B cell (primary cell): ENCODE measurements at regions of chr1 and their contacts with region 1.

Region 1: GRCh38 chr1:221839796-221840395 is 98.0 kb upstream of the DUSP10 start:
- DNase-seq: peak; percentile 46
- ATAC-seq: peak; percentile 79
- H3K4me3 ChIP-seq: no peak overlapping the region
- H3K4me3 Mint-ChIP-seq: peak overlapping the region; percentile 42
- H3K27ac ChIP-seq: no peak overlapping the region
- H3K27ac Mint-ChIP-seq: peak overlapping the region; percentile 75
- H3K4me1 ChIP-seq: peaks cover 30 to 34% of the 10 kb centered on the region in 2 donors
- H3K4me1 Mint-ChIP-seq: peaks cover 42% of the 10 kb centered on the region
- H3K27me3 ChIP-seq: peaks cover 0 to 6% (median 0%) of the 10 kb centered on the region in 4 experiments
- H3K27me3 Mint-ChIP-seq: no peaks in the 10 kb centered on the region
- CTCF ChIP-seq: no peak

Region 2: DNA sequence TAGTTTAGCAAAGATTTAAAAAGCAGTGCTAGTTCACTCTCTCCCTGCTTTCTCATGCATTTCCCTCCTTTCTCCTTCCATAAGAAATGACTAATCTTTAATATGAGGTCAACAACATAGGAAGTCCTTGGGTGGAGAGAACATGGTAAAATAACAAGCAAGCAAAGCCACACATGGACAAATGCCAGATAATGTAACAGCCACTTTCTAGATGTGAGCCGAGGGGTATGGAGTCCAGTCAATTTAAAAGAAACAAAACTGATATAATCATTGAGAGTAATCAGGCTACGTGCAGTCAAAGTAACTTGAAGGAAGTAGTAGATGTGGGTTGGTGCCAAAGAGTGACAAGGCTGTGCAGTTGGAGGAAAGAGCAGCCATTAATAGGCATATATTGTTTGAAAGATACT is 167.7 kb before region 1 on chr1:
- CTCF ChIA-PET with region 1: no interaction called
- POLR2A ChIA-PET with region 1: no interaction called
- intact Hi-C with region 1: no loop called
- DNase-seq: no peak
- ATAC-seq: no peak
- H3K4me3 ChIP-seq: no peak overlapping the region
- H3K4me3 Mint-ChIP-seq: no peak overlapping the region
- H3K27ac ChIP-seq: no peak overlapping the region
- H3K27ac Mint-ChIP-seq: no peak overlapping the region
- H3K4me1 ChIP-seq: no peaks in the 10 kb centered on the region
- H3K4me1 Mint-ChIP-seq: no peaks in the 10 kb centered on the region
- H3K27me3 ChIP-seq: no peaks in the 10 kb centered on the region
- H3K27me3 Mint-ChIP-seq: peaks cover 6% of the 10 kb centered on the region
- CTCF ChIP-seq: no peak

Region 3: GRCh38 chr1:221753828-221754188 is 86.1 kb before region 1 on chr1:
- CTCF ChIA-PET with region 1: no interaction called
- POLR2A ChIA-PET with region 1: no interaction called
- intact Hi-C with region 1: loop called (anchors 1 kb)
- DNase-seq: no peak
- ATAC-seq: no peak
- H3K4me3 ChIP-seq: peak overlapping the region in 1 of 5 experiments; percentile 43
- H3K4me3 Mint-ChIP-seq: peak overlapping the region; percentile 82
- H3K27ac ChIP-seq: no peak overlapping the region
- H3K27ac Mint-ChIP-seq: peak overlapping the region; percentile 85
- H3K4me1 ChIP-seq: peaks cover 15 to 22% of the 10 kb centered on the region in 2 donors
- H3K4me1 Mint-ChIP-seq: peaks cover 36% of the 10 kb centered on the region
- H3K27me3 ChIP-seq: no peaks in the 10 kb centered on the region
- H3K27me3 Mint-ChIP-seq: no peaks in the 10 kb centered on the region
- CTCF ChIP-seq: no peak

Region 4: DNA sequence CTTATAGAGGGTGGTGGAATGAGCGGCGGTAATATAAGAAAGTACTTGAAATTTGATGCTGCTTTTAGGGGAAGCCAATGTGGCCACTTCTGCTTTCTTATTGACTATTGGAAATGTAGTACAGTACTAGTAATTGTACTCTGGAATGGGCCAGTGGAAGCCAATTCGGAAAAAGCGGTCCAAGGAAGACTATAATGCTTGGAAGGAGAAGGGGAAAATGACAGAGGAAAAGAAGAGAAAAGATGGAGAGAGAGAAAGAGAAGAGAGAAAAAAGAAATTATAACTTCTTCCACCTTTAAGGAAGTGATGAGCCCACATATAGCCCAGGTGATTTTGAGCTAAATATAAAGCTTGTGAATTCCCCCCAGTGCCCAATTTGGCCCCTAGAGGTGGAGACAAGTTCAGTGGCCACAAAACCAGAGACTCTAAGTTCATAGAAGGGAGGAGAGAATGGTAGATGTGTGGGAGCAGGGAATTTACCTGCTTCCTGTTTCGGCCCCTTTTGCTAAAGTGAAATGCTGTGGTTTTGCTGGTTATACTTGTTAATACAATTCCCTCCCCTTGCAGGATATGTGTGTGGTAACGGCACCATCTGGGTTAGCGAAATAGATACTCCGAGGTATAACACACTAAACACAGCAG is 62.3 kb before region 1 on chr1:
- CTCF ChIA-PET with region 1: interaction called, 3 read pairs
- POLR2A ChIA-PET with region 1: no interaction called
- intact Hi-C with region 1: loop called (anchors 1 kb)
- DNase-seq: peak; percentile 91
- ATAC-seq: peak; percentile 62
- H3K4me3 ChIP-seq: peak overlapping the region in 4 of 5 experiments; percentile 3 to 49 (median 26)
- H3K4me3 Mint-ChIP-seq: peak overlapping the region; percentile 79
- H3K27ac ChIP-seq: peak overlapping the region; percentile 80 to 88
- H3K27ac Mint-ChIP-seq: peak overlapping the region; percentile 91
- H3K4me1 ChIP-seq: peaks cover 54 to 64% of the 10 kb centered on the region in 2 donors
- H3K4me1 Mint-ChIP-seq: peaks cover 65% of the 10 kb centered on the region
- H3K27me3 ChIP-seq: no peaks in the 10 kb centered on the region
- H3K27me3 Mint-ChIP-seq: no peaks in the 10 kb centered on the region
- CTCF ChIP-seq: no peak

Region 5: GRCh38 chr1:221794079-221794670 is 45.7 kb before region 1 on chr1:
- CTCF ChIA-PET with region 1: interaction called, 3 read pairs
- POLR2A ChIA-PET with region 1: interaction called, 3 read pairs
- intact Hi-C with region 1: loop called (anchors 1 kb)
- DNase-seq: peak; percentile 92
- ATAC-seq: peak; percentile 71
- H3K4me3 ChIP-seq: peak overlapping the region in 2 of 5 experiments; percentile 2 to 44
- H3K4me3 Mint-ChIP-seq: peak overlapping the region; percentile 69
- H3K27ac ChIP-seq: peak overlapping the region; percentile 87 to 99
- H3K27ac Mint-ChIP-seq: peak overlapping the region; percentile 92
- H3K4me1 ChIP-seq: peaks cover 36 to 37% of the 10 kb centered on the region in 2 donors
- H3K4me1 Mint-ChIP-seq: peaks cover 45% of the 10 kb centered on the region
- H3K27me3 ChIP-seq: no peaks in the 10 kb centered on the region
- H3K27me3 Mint-ChIP-seq: no peaks in the 10 kb centered on the region
- CTCF ChIP-seq: no peak

Region 6: GRCh38 chr1:221823149-221823548 is 16.7 kb before region 1 on chr1:
- CTCF ChIA-PET with region 1: interaction called, 4 read pairs
- POLR2A ChIA-PET with region 1: interaction called, 10 read pairs
- intact Hi-C with region 1: loop called (anchors 2 kb)
- DNase-seq: peak; percentile 30
- ATAC-seq: peak; percentile 61
- H3K4me3 ChIP-seq: no peak overlapping the region
- H3K4me3 Mint-ChIP-seq: peak overlapping the region; percentile 61
- H3K27ac ChIP-seq: no peak overlapping the region
- H3K27ac Mint-ChIP-seq: peak overlapping the region; percentile 70
- H3K4me1 ChIP-seq: peaks cover 9 to 15% of the 10 kb centered on the region in 2 donors
- H3K4me1 Mint-ChIP-seq: peaks cover 43% of the 10 kb centered on the region
- H3K27me3 ChIP-seq: no peaks in the 10 kb centered on the region
- H3K27me3 Mint-ChIP-seq: no peaks in the 10 kb centered on the region
- CTCF ChIP-seq: no peak

Region 7: DNA sequence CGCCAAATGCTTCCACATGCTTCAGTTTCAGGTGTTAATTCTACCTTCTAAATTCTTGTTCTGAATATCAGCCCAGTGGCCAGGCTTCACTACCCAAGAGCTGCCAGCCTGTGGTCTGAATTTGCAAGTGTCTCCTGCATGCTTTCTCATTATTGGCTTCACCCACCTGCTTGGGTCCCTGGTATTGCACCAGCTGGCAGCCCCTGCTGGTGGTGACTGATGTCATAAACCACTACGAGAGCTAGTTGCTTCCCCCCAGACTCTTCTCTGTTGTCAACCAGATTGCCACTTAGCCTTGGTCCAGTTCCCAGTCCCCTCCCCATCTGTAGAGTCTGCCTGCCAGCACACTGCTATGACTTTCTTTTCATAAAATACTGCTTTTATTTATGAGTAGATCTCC is 99.7 kb after region 1 on chr1:
- CTCF ChIA-PET with region 1: no interaction called
- POLR2A ChIA-PET with region 1: no interaction called
- intact Hi-C with region 1: loop called (anchors 5 kb)
- DNase-seq: peak; percentile 85
- ATAC-seq: peak; percentile 95
- H3K4me3 ChIP-seq: no peak overlapping the region
- H3K4me3 Mint-ChIP-seq: peak overlapping the region; percentile 29
- H3K27ac ChIP-seq: peak overlapping the region in 1 of 2 donors; percentile 27
- H3K27ac Mint-ChIP-seq: peak overlapping the region; percentile 76
- H3K4me1 ChIP-seq: peaks cover 22 to 27% of the 10 kb centered on the region in 2 donors
- H3K4me1 Mint-ChIP-seq: peaks cover 38% of the 10 kb centered on the region
- H3K27me3 ChIP-seq: no peaks in the 10 kb centered on the region
- H3K27me3 Mint-ChIP-seq: no peaks in the 10 kb centered on the region
- CTCF ChIP-seq: peak; percentile 38

Region 8: GRCh38 chr1:221958156-221958562 is 118.3 kb after region 1 on chr1:
- CTCF ChIA-PET with region 1: no interaction called
- POLR2A ChIA-PET with region 1: no interaction called
- intact Hi-C with region 1: no loop called
- DNase-seq: no peak
- ATAC-seq: no peak
- H3K4me3 ChIP-seq: no peak overlapping the region
- H3K4me3 Mint-ChIP-seq: no peak overlapping the region
- H3K27ac ChIP-seq: no peak overlapping the region
- H3K27ac Mint-ChIP-seq: no peak overlapping the region
- H3K4me1 ChIP-seq: no peaks in the 10 kb centered on the region
- H3K4me1 Mint-ChIP-seq: peaks cover 11% of the 10 kb centered on the region
- H3K27me3 ChIP-seq: no peaks in the 10 kb centered on the region
- H3K27me3 Mint-ChIP-seq: no peaks in the 10 kb centered on the region
- CTCF ChIP-seq: no peak

Region 9: GRCh38 chr1:222021129-222021528 is 181.2 kb after region 1 on chr1:
- CTCF ChIA-PET with region 1: no interaction called
- POLR2A ChIA-PET with region 1: no interaction called
- intact Hi-C with region 1: no loop called
- DNase-seq: no peak
- ATAC-seq: no peak
- H3K4me3 ChIP-seq: no peak overlapping the region
- H3K4me3 Mint-ChIP-seq: no peak overlapping the region
- H3K27ac ChIP-seq: no peak overlapping the region
- H3K27ac Mint-ChIP-seq: no peak overlapping the region
- H3K4me1 ChIP-seq: no peaks in the 10 kb centered on the region
- H3K4me1 Mint-ChIP-seq: no peaks in the 10 kb centered on the region
- H3K27me3 ChIP-seq: no peaks in the 10 kb centered on the region
- H3K27me3 Mint-ChIP-seq: no peaks in the 10 kb centered on the region
- CTCF ChIP-seq: no peak